GM10248 (cell line): ENCODE measurements at regions of chr1 and their contacts with region 1.

Region 1: DNA sequence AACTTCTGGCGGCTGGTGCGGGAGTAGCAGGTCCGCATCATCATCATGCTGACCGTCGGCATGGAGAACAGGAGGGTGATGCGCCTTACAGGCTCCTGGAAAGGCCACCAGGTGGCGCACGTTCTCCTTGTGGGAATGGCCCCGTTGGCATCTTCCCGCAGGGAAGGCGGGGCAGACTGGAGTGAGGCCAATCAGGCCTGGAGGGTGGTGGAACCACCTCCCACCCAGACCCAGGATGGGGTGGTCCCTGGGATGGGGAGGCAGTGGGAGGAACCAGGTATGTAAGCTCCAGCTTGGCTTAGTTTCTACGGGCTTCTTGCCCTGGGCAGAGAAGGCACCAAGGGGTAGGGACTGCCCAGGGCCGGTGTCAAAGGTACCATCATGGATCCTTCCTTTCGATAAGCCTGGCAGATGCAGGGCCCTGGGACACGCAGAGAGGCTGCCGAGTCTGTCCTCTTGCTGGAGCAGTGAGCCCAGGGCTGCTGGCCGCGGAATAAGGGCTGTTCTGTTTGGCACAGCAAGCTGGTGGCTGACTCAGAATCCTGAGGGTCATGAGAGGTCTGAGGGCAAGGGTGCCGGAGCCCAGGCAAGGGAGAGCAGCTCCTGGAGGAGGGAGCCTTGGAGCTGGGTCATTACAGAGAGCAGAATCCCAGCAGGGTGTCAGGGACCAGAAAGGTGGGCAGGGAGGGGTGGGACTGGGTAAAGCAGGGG is 8.7 kb upstream of the LGR6 start:
- DNase-seq: peak; percentile 69
- CTCF ChIP-seq: peak; percentile 89

Region 2: DNA sequence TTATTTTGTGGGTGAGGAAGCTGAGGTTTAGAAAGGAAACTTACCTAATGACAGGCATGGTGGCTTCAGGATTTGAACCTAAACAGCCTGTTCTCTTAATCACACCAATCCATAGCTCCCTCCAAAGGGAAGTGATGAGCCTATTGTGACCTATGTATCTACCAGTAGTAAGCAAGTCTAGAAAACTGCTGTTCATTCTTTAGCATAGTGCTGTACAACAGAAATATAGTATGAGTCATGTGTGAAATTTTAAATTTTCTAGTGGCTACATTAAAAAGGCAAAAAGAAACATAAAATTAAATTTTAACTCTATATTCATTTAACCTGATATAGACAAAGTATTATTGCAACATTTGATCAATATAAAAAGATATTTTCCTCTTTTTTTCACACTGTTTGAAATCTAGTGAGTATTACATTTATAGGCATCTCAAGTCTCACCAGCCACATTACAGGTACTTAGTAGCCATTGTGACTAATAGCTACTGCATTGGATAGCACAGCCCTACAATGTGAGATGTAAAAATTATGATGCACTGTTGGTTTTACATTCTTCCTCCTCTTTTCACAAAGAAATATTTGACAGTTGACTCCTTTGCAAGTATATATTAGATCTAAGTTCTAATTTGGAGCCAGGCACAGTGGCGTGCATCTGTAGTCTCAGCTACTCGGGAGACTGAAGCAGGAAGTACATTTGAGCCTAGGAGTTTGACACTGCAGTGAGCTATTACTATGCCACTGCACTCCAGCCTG is 339.4 kb before region 1 on chr1:
- CTCF ChIA-PET with region 1: no interaction called
- POLR2A ChIA-PET with region 1: no interaction called
- DNase-seq: no peak
- CTCF ChIP-seq: no peak

Region 3: GRCh38 chr1:202154766-202155477 is 30.0 kb before region 1 on chr1:
- CTCF ChIA-PET with region 1: interaction called, 17 read pairs
- POLR2A ChIA-PET with region 1: no interaction called
- DNase-seq: peak; percentile 53
- CTCF ChIP-seq: peak; percentile 65

Region 4: GRCh38 chr1:202160377-202160940 is 24.4 kb before region 1 on chr1 and contains the start of gene PTPN7:
- CTCF ChIA-PET with region 1: interaction called, 17 read pairs
- POLR2A ChIA-PET with region 1: no interaction called
- DNase-seq: peak; percentile 82
- CTCF ChIP-seq: peak; percentile 73

Region 5: DNA sequence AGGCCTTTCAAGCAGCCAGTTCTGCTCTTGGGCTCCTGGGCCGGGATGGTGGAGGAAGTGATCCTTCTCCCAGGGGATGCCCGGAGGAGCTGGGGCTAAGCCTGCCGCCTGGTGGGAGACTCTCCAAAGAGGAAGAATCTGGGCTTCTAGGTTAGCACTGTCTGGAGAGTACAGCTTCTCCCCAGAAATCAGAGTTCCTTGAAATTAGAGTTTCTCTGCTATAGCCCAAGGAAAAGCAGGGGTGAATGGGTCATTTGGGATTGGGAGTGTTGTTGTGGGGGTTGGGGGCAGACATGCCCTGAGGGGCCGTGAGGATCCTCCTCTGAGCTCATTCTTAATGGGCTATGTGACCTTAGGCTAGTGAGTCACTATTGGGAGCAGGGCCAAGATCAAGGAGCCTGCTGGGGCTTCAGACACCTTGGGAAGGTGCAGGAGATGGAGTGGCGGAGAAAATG is 15.2 kb after region 1 on chr1:
- CTCF ChIA-PET with region 1: interaction called, 20 read pairs
- POLR2A ChIA-PET with region 1: no interaction called
- DNase-seq: no peak
- CTCF ChIP-seq: no peak

Region 6: DNA sequence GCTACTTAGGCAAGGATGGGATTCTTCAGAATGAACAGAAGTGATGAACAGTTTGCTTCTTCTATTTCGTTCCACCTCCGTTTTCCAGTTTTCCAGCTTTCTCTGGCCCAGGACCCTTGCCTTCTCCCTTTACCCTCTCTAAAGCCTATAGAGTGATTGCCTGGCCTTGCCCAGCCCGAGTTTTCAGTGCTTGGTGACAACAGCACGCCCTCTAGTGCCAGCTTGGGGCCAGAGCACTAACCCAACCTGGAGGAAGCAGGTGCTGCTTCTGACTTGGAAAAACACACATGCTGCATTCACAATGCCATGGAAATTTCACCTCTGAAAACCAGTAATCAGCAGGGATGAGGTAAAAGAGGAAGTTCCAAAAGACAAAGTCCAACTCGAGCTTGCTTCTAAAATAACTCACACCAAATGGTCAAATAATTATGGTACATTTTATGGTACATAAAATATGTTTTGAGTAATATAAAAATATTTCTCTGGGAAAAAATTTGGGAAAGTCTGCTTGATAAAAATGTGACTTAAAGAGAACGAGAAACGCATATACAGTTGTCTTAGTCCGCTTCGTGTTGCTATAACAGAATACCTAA is 130.8 kb after region 1 on chr1:
- CTCF ChIA-PET with region 1: interaction called, 48 read pairs
- POLR2A ChIA-PET with region 1: no interaction called
- DNase-seq: peak; percentile 80
- CTCF ChIP-seq: peak; percentile 96

Region 7: DNA sequence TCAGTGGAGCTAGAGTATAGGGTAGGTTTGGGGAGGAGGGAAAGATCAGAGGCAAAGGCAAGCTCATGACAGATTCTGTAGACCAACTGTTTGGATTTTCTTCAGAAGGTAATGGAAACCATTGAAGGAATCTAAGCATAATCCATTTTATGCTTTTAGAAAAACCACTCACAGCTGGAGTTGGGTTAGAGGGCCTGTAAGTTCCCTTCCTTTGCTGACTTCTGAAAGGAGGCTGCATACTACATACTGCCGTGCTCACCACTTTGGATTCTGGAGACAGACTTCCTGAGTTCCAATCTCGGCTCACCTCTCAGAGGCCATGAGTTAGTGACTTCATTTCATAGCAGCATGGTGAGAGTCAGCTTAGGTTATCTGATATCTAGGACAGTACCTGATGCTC is 531.7 kb after region 1 on chr1:
- CTCF ChIA-PET with region 1: interaction called, 18 read pairs
- POLR2A ChIA-PET with region 1: no interaction called
- DNase-seq: no peak
- CTCF ChIP-seq: no peak